CD4-positive, alpha-beta memory T cell (primary cell): ENCODE measurements at regions of chr6 and their contacts with region 1.

Region 1: GRCh38 chr6:136282906-136283305 is 6.7 kb downstream of the BCLAF1 start:
- DNase-seq: peak in 1 of 5 donors; percentile 33
- H3K4me3 ChIP-seq: peak overlapping the region in 1 of 2 donors; percentile 14
- H3K4me3 Mint-ChIP-seq: peak overlapping the region; percentile 57 to 88 (median 80)
- H3K27ac ChIP-seq: peak overlapping the region; percentile 20
- H3K27ac Mint-ChIP-seq: peak overlapping the region; percentile 21 to 80 (median 69)
- H3K4me1 ChIP-seq: peaks cover 84% of the 10 kb centered on the region
- H3K4me1 Mint-ChIP-seq: peaks cover 57 to 92% (median 79%) of the 10 kb centered on the region in 4 donors
- H3K27me3 ChIP-seq: no peaks in the 10 kb centered on the region
- H3K27me3 Mint-ChIP-seq: no peaks in the 10 kb centered on the region

Region 2: GRCh38 chr6:136262940-136263339 is 20.0 kb before region 1 on chr6:
- CTCF ChIA-PET with region 1: interaction called, 4 read pairs
- POLR2A ChIA-PET with region 1: interaction called, 22 read pairs
- intact Hi-C with region 1: loop called (anchors 1 kb)
- DNase-seq: no peak
- H3K4me3 ChIP-seq: no peak overlapping the region
- H3K4me3 Mint-ChIP-seq: no peak overlapping the region
- H3K27ac ChIP-seq: no peak overlapping the region
- H3K27ac Mint-ChIP-seq: peak overlapping the region in 2 of 7 donors; percentile 14 to 62
- H3K4me1 ChIP-seq: peaks cover 8% of the 10 kb centered on the region
- H3K4me1 Mint-ChIP-seq: peaks cover 19 to 37% (median 28%) of the 10 kb centered on the region in 4 donors
- H3K27me3 ChIP-seq: no peaks in the 10 kb centered on the region
- H3K27me3 Mint-ChIP-seq: no peaks in the 10 kb centered on the region

Region 3: DNA sequence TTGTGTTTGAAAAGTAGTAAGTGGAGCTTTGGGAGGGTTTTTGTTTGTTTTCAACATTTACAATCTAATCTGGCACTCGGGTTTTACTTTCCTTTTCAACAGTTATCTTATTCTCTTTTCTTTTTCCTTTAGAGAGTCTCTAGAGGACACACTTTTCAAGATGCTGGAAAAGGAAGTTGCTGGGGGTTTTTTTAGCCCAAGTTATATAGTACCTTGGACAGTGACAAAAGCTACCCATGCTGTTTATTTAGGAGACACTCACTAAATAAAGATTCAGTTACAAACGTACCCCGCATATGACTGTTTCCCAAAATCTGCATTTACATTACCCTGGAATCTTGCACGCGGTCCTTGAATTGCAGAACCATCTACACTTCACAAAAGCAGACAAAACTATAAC is 188.5 kb after region 1 on chr6:
- CTCF ChIA-PET with region 1: no interaction called
- POLR2A ChIA-PET with region 1: no interaction called
- intact Hi-C with region 1: no loop called
- DNase-seq: no peak
- H3K4me3 ChIP-seq: no peak overlapping the region
- H3K4me3 Mint-ChIP-seq: no peak overlapping the region
- H3K27ac ChIP-seq: no peak overlapping the region
- H3K27ac Mint-ChIP-seq: no peak overlapping the region
- H3K4me1 ChIP-seq: no peaks in the 10 kb centered on the region
- H3K4me1 Mint-ChIP-seq: peaks cover 0 to 2% (median 0%) of the 10 kb centered on the region in 4 donors
- H3K27me3 ChIP-seq: no peaks in the 10 kb centered on the region
- H3K27me3 Mint-ChIP-seq: peaks cover 7% of the 10 kb centered on the region in 2 donors